GM10248 (cell line): ENCODE measurements at regions of chr1 and their contacts with region 1.

Region 1: GRCh38 chr1:197638316-197638715 is 137.0 kb downstream of the DENND1B start:
- DNase-seq: no peak
- CTCF ChIP-seq: no peak

Region 2: GRCh38 chr1:197649188-197649587 is 10.9 kb after region 1 on chr1:
- CTCF ChIA-PET with region 1: interaction called, 23 read pairs
- POLR2A ChIA-PET with region 1: no interaction called
- DNase-seq: no peak
- CTCF ChIP-seq: no peak